H1 (cell line): ENCODE measurements at regions of chr11 and their contacts with region 1.

Region 1: DNA sequence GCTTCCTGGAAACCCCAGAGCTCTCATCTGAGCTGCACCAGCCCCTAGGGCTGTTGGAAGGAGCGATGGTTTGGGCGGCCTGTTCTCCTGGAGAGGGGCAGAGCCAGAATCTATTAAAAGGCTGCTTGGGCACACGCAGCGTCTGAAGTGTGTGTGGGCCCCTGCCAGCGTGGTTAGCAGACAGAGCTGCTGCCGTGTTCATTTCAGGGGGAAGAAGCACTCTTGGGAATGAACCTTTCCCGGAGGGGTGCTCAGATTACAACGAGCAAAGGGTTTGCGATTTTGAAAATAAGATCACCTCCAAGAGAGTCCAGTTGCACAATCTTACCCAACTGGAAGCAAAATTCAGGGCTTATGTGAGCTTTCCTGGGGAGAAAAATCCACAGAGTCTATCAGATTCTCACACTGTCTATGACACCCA is 12.9 kb downstream of the ANO1 start:
- DNase-seq: no peak
- H3K4me3 ChIP-seq: no peak overlapping the region
- H3K27ac ChIP-seq: no peak overlapping the region
- H3K4me1 ChIP-seq: peaks cover 0 to 6% (median 4%) of the 10 kb centered on the region in 4 experiments; a peak in 6 of 7 replicates
- H3K27me3 ChIP-seq: no peaks in the 10 kb centered on the region; a peak in 1 of 7 replicates
- CTCF ChIP-seq: no peak
- EP300 ChIP-seq: no peak
- POLR2A ChIP-seq: no peak
- RAD21 ChIP-seq: no peak

Region 2: GRCh38 chr11:70005107-70005818 is 85.7 kb before region 1 on chr11:
- CTCF ChIA-PET with region 1: no interaction called
- POLR2A ChIA-PET with region 1: no interaction called
- DNase-seq: no peak
- H3K4me3 ChIP-seq: no peak overlapping the region
- H3K27ac ChIP-seq: no peak overlapping the region
- H3K4me1 ChIP-seq: peaks cover 0 to 6% (median 2%) of the 10 kb centered on the region in 4 experiments; a peak in 3 of 7 replicates
- H3K27me3 ChIP-seq: peaks cover 0 to 17% (median 10%) of the 10 kb centered on the region in 4 experiments; a peak in 6 of 7 replicates
- CTCF ChIP-seq: no peak
- EP300 ChIP-seq: no peak
- POLR2A ChIP-seq: no peak
- RAD21 ChIP-seq: no peak

Region 3: DNA sequence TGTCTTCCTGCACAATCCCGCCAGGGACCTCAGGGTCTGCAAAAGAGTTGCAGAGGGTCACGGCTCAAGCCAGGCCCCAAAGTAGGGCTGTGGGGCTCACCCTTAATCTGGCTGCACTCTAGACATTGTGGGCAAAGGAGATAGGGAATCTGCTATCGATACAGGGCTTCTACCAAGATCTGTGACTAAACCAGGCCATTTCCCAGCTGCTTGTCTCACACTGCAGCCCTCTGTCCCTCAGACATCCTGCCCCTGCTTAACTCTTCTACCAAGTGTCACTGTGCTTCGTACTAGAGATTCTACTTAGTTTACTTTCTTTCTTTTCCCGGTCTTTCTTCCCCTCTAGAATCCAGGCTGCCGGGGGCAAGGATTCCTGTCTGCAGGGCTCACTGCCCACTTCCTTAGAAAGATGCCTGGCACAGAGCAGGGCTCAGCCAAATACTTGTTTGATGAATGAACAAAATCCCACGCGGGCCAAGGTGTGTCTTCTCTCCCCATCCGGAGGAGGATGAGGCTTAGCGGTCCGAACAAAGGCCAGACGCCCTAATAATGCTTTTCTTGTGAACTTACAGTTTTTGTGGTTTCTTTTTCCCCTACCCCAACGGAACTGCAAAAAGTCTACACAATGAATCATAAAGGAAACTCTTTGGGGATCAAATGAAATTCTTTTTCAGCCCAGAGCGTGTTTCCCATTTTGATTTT is 74.2 kb before region 1 on chr11:
- CTCF ChIA-PET with region 1: no interaction called
- POLR2A ChIA-PET with region 1: no interaction called
- DNase-seq: no peak
- H3K4me3 ChIP-seq: no peak overlapping the region
- H3K27ac ChIP-seq: no peak overlapping the region
- H3K4me1 ChIP-seq: no peaks in the 10 kb centered on the region
- H3K27me3 ChIP-seq: no peaks in the 10 kb centered on the region
- CTCF ChIP-seq: no peak
- EP300 ChIP-seq: no peak
- POLR2A ChIP-seq: no peak
- RAD21 ChIP-seq: no peak

Region 4: GRCh38 chr11:70067591-70068341 is 23.2 kb before region 1 on chr11:
- CTCF ChIA-PET with region 1: interaction called, 11 read pairs
- POLR2A ChIA-PET with region 1: interaction called, 3 read pairs
- DNase-seq: peak in 1 of 2 experiments; percentile 50
- H3K4me3 ChIP-seq: no peak overlapping the region
- H3K27ac ChIP-seq: no peak overlapping the region
- H3K4me1 ChIP-seq: peaks cover 11 to 35% (median 13%) of the 10 kb centered on the region in 4 experiments
- H3K27me3 ChIP-seq: peaks cover 0 to 7% (median 0%) of the 10 kb centered on the region in 4 experiments; a peak in 1 of 7 replicates
- CTCF ChIP-seq: peak in 1 of 3 experiments; percentile 30; a peak in 2 of 4 replicates
- EP300 ChIP-seq: no peak
- POLR2A ChIP-seq: no peak
- RAD21 ChIP-seq: peak; percentile 33 to 48; a peak in 3 of 4 replicates

Region 5: DNA sequence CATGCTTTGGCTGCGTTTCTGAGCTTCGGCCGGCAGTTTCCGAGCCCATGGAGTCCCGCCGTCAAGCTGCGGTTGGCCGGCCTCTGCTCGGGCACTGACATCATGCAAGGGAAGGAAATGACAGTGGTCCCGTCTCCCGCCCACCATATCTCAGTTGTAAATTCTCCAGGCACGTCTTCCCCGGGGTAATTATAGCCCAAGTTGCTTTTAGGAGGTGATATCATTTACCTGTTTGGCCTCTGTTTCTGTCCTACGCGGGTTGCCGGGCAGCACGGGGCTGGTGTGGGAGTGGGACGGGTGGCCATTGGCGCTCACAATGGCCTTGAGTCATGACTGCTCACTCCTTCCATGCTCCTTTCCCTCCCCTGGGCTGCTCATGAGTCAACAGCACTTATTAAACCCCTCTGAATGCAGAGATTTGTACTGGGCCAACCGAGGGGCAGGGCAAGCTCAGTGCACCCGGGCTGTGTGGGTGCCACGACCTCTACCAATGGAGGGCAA is 17.1 kb before region 1 on chr11:
- CTCF ChIA-PET with region 1: interaction called, 11 read pairs
- POLR2A ChIA-PET with region 1: interaction called, 3 read pairs
- DNase-seq: no peak
- H3K4me3 ChIP-seq: peak overlapping the region in 1 of 4 experiments; percentile 33; a peak in 1 of 8 replicates
- H3K27ac ChIP-seq: no peak overlapping the region
- H3K4me1 ChIP-seq: peaks cover 8 to 41% (median 20%) of the 10 kb centered on the region in 4 experiments
- H3K27me3 ChIP-seq: peaks cover 20 to 46% (median 37%) of the 10 kb centered on the region in 4 experiments
- CTCF ChIP-seq: no peak
- EP300 ChIP-seq: no peak
- POLR2A ChIP-seq: no peak
- RAD21 ChIP-seq: no peak

Region 6: GRCh38 chr11:70104419-70104818 is 13.4 kb after region 1 on chr11:
- CTCF ChIA-PET with region 1: interaction called, 12 read pairs
- POLR2A ChIA-PET with region 1: no interaction called
- DNase-seq: no peak
- H3K4me3 ChIP-seq: no peak overlapping the region
- H3K27ac ChIP-seq: no peak overlapping the region
- H3K4me1 ChIP-seq: peaks cover 0 to 10% (median 5%) of the 10 kb centered on the region in 4 experiments; a peak in 4 of 7 replicates
- H3K27me3 ChIP-seq: no peaks in the 10 kb centered on the region
- CTCF ChIP-seq: no peak
- EP300 ChIP-seq: no peak
- POLR2A ChIP-seq: no peak
- RAD21 ChIP-seq: no peak